Right ventricle myocardium inferior (tissue), 1 donor: ENCODE measurements at regions of chr6 and their contacts with region 1.

Region 1: GRCh38 chr6:593139-593906 is 63.6 kb downstream of the HUS1B start:
- DNase-seq: no peak
- ATAC-seq: no peak

Region 2: DNA sequence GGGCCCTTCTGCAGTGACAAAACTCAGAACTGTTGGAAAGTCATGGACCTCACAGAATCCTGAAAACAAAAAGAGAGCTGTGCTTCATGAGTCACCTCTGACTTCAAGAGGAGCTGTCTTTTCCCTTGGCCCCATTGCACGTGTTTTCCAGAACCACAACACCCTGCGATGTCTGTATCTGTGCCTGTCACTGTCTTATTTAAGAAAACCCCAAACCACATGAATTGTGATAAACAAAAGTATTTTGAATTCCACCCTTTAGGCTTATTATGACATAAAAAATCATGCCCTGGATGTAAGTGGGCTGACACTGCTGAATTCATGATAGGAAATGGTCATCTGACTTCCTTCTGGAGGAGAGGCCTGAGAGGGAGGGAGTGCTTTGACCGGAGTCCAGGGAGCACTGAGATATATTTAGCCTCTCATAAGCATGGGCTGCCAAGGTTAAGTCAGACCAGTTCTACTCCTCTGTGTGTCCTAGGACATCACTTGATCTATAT is 397.4 kb before region 1 on chr6:
- intact Hi-C with region 1: loop called (anchors 2 kb)
- DNase-seq: no peak
- ATAC-seq: peak; percentile 96

Region 3: DNA sequence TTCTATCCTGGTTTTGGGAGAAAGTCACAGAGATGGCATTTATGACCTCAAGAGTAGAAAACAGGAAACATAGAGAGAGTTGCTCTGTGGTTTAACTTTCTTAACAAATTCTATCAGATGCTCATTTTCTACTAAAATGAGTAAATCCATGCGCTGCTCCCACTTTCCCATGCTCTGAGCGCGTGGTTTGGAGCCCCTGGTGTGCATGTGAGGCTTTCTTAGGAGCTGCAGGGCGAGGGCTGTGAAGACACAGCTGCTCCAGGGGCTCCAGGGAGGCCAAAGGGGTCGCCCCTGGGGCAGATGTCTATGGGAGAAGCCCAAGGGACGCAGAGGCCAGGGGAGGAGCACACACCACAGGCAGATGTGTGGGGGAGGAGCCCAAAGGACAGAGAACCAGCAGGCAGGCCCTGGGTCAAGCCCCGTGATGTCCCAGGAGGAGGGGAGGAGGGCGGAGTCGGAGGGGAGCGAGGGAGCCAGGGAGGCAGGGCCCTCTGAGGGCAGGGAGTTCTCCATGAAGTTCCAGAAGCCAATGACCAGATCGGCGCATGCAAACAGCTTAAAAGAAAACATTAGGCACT is 78.8 kb before region 1 on chr6:
- intact Hi-C with region 1: no loop called
- DNase-seq: no peak
- ATAC-seq: no peak

Region 4: DNA sequence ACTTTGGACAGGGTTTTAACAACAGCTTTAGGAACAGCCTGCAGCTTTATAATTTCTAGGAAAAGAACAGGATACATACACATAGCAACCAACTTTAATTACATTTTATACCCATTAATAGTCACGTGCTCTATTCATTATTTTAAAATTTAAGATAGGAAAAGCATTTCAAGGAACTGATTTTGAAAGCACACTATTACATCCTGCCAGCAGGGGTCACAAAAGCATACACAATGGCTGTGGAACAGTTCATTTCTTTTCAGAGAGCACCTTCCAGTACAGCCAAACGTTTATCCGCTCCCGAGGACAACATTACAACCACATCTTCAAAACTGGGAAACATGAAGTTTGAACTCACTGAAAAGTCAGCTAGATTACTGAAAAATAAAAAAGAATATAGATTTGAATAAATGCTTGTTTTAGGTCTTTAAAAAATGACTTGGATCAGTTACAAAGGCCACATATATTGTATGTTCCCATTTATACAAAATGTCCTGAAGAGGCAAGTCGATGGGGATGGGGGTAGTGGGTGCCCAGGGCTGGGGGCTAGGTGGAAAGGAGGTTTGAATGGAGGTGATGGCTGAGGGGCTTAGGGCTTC is 204.3 kb after region 1 on chr6:
- intact Hi-C with region 1: loop called (anchors 5 kb)
- DNase-seq: no peak
- ATAC-seq: no peak

Region 5: GRCh38 chr6:1396952-1397868 is 803.9 kb after region 1 on chr6:
- intact Hi-C with region 1: loop called (anchors 5 kb)
- DNase-seq: peak; percentile 84
- ATAC-seq: peak; percentile 53